ENCODE measurements at regions of chr13 and their contacts with region 1.

Region 1: DNA sequence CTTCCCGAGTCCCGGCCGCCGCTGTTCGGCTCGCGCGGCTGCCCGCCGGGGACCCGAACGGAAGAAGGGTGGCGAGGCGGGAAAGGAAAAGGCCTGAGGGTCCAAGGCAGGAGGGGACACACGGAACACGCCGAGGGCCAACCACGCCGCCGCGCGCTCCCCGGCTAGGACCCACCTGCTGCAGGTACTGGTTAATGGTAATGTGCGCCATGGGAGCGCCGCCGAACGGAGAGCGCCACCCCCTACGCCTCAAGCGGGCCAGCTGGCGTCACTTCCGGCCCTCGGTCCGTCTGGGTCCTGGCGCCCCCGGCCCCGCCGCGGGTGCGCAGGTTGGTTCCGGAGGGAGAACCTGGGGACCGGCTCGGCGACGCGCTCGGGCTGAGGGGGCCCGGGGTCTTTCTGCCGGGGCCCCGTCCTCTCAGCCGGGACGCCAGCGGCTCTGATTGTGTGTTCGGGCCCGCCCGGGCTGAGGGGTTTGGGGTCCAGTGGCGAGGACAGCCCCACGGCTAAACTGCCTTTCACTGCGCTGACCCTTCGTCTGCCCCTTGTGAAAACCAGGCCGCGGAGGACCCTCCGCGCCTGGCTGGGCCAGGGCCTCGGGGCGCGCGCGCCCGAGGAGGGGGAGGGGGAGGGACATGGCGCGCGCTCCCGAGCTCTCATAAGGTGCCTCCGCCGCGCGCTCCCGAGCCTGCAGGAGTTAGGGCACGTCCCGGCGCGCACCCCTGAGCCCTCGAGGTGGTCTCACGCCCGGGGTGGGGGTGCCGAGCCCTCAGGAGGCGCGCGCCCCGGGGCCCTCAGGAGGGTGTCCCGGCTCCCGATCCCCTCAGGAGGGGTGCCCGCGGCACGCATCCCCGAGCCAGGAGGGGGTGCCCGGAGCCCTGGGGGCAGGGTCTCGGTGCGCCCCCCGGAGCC is at the start of gene PCID2:
- DNase-seq: peak; percentile 93
- ATAC-seq: peak; percentile 77
- H3K4me3 Mint-ChIP-seq: peak within 1 kb of the TSS; percentile 90
- H3K27ac Mint-ChIP-seq: peak within 1 kb of the TSS; percentile 90
- H3K4me1 Mint-ChIP-seq: peaks cover 58% of the 10 kb centered on the region
- H3K27me3 Mint-ChIP-seq: no peaks in the 10 kb centered on the region
- total RNA-seq, gene PCID2: 66.7 to 72.8 TPM

Region 2: DNA sequence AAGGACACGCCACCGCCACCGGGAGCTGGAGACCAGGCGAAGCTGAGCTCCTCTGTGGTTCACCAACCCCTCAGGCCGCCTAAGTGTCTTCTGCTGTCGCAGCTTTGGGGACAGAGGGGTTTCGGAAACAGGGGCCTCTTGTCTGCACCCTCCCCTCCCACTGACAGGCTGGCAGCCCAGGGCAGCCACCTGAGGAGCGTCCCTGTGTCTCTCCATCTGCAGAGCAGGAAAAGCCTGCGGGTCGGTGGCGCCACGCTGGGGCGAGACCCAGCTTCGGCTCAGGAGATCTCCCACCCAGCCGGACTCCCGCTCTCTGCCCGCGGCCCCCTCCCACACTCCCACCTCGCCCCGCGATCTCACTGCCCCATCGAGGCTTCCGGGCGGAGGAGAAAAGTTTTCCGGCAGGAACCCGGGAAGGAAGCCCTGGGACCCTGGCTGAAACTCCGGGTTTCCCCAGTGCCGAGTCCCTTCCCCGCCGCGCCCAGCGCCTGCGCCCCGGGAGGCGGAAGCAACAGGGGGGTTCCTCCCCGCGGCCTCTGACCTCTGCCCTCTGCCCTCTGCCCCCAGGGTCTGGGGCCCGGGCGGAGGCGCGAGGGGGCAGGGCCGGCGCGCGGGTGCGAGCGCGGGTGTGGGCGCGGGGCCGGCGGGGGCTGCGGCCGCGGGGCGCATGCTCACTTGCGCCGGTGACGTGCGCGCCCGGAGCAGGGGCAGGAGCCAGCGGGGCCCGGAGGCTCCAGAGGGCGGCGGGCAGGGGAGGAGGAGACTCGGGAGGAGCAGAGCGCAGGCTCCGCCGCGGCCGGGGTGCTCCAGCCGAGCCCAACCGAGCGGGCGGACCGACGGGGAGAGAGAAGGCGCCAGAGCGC is 519.1 kb before region 1 on chr13 and contains the start of gene ATP11A:
- CTCF ChIA-PET with region 1: no interaction called
- POLR2A ChIA-PET with region 1: no interaction called
- intact Hi-C with region 1: loop called in 1 of 2 experiments (anchors 1 kb)
- DNase-seq: peak; percentile 90
- ATAC-seq: peak; percentile 84
- H3K4me3 Mint-ChIP-seq: peak within 1 kb of the TSS; percentile 84
- H3K27ac Mint-ChIP-seq: peak within 1 kb of the TSS; percentile 91
- H3K4me1 Mint-ChIP-seq: peaks cover 49% of the 10 kb centered on the region
- H3K27me3 Mint-ChIP-seq: no peaks in the 10 kb centered on the region
- total RNA-seq, gene ATP11A: 42.1 to 50.7 TPM

Region 3: GRCh38 chr13:113153810-113154748 is 54.6 kb before region 1 on chr13:
- CTCF ChIA-PET with region 1: no interaction called
- POLR2A ChIA-PET with region 1: no interaction called
- intact Hi-C with region 1: loop called (anchors 1 to 5 kb)
- DNase-seq: peak; percentile 80
- ATAC-seq: peak; percentile 72
- H3K4me3 Mint-ChIP-seq: peak overlapping the region; percentile 67
- H3K27ac Mint-ChIP-seq: no peak overlapping the region
- H3K4me1 Mint-ChIP-seq: peaks cover 17% of the 10 kb centered on the region
- H3K27me3 Mint-ChIP-seq: peaks cover 13% of the 10 kb centered on the region

Region 4: DNA sequence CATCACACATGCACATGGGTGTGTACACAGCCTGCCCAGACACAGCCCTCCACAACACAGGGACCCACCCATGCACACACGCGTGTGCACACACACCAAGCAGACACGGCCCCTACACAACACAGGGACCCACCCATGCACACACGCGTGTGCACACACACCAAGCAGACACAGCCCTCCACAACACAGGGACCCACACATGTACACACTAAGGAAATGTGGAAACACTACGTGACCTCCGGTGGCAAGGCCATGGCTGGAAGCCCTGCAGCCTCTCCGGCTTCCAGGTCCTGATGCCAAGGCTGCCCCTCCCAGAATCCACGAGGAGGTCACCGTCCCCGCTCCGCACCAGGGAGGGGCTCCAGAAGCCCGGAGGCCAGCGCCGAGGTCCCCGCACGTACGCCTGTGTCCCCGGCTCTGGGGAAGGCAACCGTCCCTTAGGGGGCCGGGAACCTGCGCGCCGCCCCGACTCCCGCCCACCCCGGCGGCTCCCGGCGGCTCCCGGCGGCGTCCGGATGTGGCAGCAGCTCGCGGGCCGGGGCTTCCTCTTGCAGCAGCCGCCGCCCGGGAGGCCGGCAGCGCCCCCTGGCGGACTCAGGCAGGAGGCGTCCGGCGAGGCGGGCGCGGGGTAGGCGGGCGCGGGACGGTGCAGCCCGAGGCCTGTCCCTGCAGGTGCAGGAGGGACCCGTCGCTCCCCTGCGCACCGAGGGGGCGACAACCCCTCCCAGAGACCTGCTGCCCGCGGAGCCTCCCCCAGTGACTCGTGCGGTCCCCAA is 185.1 kb after region 1 on chr13:
- CTCF ChIA-PET with region 1: no interaction called
- POLR2A ChIA-PET with region 1: no interaction called
- intact Hi-C with region 1: loop called in 1 of 2 experiments (anchors 1 kb)
- DNase-seq: peak; percentile 92
- ATAC-seq: peak; percentile 94
- H3K4me3 Mint-ChIP-seq: peak overlapping the region; percentile 91
- H3K27ac Mint-ChIP-seq: peak overlapping the region; percentile 85
- H3K4me1 Mint-ChIP-seq: peaks cover 4% of the 10 kb centered on the region
- H3K27me3 Mint-ChIP-seq: no peaks in the 10 kb centered on the region

Region 5: DNA sequence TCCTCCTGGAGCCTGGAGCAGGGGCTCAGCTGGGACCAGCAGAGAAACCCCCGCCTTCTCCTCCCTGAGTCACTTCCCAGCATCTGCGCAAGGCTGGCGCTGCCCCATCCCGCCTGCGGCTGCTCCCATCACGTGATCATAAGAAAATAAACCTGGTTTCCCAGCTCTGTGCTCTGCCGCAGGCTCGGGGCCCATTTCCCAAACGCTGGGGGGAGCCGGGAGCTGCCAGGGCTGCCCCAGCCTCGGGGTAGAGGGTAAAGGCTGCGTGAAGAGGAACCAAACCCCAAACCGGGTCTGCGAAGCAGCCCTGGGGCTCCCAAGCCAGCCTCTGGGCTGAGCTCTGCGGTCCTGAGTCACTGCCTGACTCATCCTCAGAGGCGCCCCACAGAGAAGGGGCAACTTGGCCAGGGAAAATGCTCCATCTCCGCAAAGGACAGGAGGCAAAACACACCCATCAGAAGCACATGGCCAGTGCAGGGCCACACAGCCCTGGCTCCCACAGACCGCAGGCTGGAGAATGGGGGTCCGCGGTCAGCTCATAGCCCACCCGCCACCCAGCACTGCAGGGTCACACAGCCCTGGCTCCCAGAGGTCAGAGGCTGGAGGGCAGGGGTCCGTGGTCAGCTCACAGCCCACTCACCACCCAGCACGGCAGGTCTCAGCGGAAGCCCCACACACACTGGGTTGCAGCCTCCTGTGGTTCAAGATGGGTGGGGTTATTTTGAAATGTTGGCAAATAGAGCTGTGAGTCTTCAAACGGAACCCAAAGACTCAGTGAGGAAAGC is 856.7 kb after region 1 on chr13:
- CTCF ChIA-PET with region 1: no interaction called
- POLR2A ChIA-PET with region 1: no interaction called
- intact Hi-C with region 1: loop called in 1 of 2 experiments (anchors 10 kb)
- DNase-seq: peak; percentile 91
- ATAC-seq: peak; percentile 82
- H3K4me3 Mint-ChIP-seq: peak overlapping the region; percentile 69
- H3K27ac Mint-ChIP-seq: peak overlapping the region; percentile 95
- H3K4me1 Mint-ChIP-seq: peaks cover 69% of the 10 kb centered on the region
- H3K27me3 Mint-ChIP-seq: no peaks in the 10 kb centered on the region

Measured in activated CD4-positive, alpha-beta T cell treated with anti-CD3 and anti-CD28 coated beads for 36 hours (primary cell).